Caco-2 (cell line): ENCODE measurements at regions of chr3 and their contacts with region 1.

Region 1: DNA sequence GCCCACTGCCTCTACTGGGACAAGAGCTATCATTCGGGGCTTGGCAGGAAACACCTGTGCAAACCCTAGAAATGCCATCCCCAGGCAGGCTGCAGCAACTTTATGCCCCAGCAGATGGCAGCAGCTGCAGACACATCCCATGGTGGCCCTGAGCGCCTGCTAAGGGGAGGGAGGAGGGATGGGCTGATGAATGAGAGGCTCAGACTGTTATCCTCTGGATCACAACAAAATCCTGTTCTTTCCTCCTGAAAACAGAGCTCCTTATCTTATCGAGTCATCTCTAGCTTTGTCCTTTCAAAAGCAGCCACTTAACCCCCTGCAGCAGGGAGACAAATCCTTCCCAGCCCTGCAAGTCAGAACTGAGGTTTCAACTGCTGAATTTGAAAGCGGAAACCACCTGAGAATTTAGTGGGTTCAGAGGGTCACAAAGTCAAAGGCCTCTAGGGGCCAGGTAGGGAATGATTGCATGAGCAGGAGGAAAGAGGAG is 90.6 kb upstream of the PROK2 start:
- DNase-seq: peak; percentile 77 to 86
- H3K4me3 ChIP-seq: no peak overlapping the region
- H3K4me3 Mint-ChIP-seq: no peak overlapping the region
- H3K27ac Mint-ChIP-seq: no peak overlapping the region
- H3K4me1 ChIP-seq: 0 out of 2 replicates have a peak, but pooled peaks cover 3% of the 10 kb centered on the region
- H3K4me1 Mint-ChIP-seq: no peaks in the 10 kb centered on the region
- H3K27me3 ChIP-seq: no peaks in the 10 kb centered on the region
- H3K27me3 Mint-ChIP-seq: no peaks in the 10 kb centered on the region
- CTCF ChIP-seq: peak; percentile 59 to 88

Region 2: GRCh38 chr3:71710906-71711494 is 164.5 kb before region 1 on chr3:
- CTCF ChIA-PET with region 1: interaction called, 6 read pairs
- POLR2A ChIA-PET with region 1: no interaction called
- intact Hi-C with region 1: loop called (anchors 5 kb)
- DNase-seq: peak in 1 of 2 experiments; percentile 29
- H3K4me3 ChIP-seq: no peak overlapping the region
- H3K4me3 Mint-ChIP-seq: no peak overlapping the region
- H3K27ac Mint-ChIP-seq: no peak overlapping the region
- H3K4me1 ChIP-seq: peaks cover 9% of the 10 kb centered on the region
- H3K4me1 Mint-ChIP-seq: no peaks in the 10 kb centered on the region
- H3K27me3 ChIP-seq: no peaks in the 10 kb centered on the region
- H3K27me3 Mint-ChIP-seq: no peaks in the 10 kb centered on the region
- CTCF ChIP-seq: peak; percentile 38 to 57

Region 3: DNA sequence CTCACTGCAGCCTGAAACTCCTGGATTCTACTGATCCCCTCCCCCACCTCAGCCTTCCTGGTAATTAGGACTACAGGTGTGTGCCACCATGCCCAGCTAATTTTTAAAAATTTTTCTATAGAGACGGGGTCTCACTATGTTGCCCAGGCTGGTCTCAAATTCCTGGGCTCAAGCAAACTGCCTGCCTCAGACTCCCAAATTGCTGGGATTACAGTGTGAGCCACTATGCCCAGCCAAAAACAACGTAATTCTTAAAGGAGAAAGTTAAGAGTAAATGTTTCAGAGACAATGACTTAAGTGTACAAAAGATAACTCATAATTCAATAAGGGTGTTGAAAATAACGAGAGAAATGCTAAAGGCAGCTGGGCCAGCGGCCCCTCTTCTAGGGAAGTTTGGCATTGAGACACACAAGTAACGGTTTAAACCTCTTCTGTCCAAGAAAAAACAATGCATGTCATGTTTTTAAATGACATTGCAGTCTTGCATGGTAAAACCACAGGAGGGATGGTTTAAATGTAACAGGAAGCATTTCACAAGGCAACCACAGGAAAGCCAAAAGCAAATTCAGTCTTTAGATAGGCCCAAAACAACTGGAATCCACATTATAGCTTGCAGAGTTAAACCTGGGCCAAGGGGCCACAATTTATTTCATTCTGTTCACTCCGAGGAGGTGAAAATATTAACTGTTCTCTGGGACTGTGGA is 95.7 kb before region 1 on chr3:
- CTCF ChIA-PET with region 1: no interaction called
- POLR2A ChIA-PET with region 1: interaction called, 10 read pairs
- intact Hi-C with region 1: no loop called
- DNase-seq: no peak
- H3K4me3 ChIP-seq: no peak overlapping the region
- H3K4me3 Mint-ChIP-seq: no peak overlapping the region
- H3K27ac Mint-ChIP-seq: no peak overlapping the region
- H3K4me1 ChIP-seq: no peaks in the 10 kb centered on the region; the same call in 1 of the 2 replicates
- H3K4me1 Mint-ChIP-seq: no peaks in the 10 kb centered on the region
- H3K27me3 ChIP-seq: peaks cover 1% of the 10 kb centered on the region; the same call in 1 of the 2 replicates
- H3K27me3 Mint-ChIP-seq: peaks cover 4% of the 10 kb centered on the region
- CTCF ChIP-seq: no peak

Region 4: GRCh38 chr3:71926262-71926600 is 50.7 kb after region 1 on chr3:
- CTCF ChIA-PET with region 1: interaction called, 3 read pairs
- POLR2A ChIA-PET with region 1: no interaction called
- intact Hi-C with region 1: loop called (anchors 2 kb)
- DNase-seq: peak; percentile 67 to 71
- H3K4me3 ChIP-seq: no peak overlapping the region
- H3K4me3 Mint-ChIP-seq: no peak overlapping the region
- H3K27ac Mint-ChIP-seq: no peak overlapping the region
- H3K4me1 ChIP-seq: peaks cover 8% of the 10 kb centered on the region; the same call in 1 of the 2 replicates
- H3K4me1 Mint-ChIP-seq: peaks cover 9% of the 10 kb centered on the region
- H3K27me3 ChIP-seq: no peaks in the 10 kb centered on the region
- H3K27me3 Mint-ChIP-seq: peaks cover 8% of the 10 kb centered on the region
- CTCF ChIP-seq: peak; percentile 66 to 76

Region 5: DNA sequence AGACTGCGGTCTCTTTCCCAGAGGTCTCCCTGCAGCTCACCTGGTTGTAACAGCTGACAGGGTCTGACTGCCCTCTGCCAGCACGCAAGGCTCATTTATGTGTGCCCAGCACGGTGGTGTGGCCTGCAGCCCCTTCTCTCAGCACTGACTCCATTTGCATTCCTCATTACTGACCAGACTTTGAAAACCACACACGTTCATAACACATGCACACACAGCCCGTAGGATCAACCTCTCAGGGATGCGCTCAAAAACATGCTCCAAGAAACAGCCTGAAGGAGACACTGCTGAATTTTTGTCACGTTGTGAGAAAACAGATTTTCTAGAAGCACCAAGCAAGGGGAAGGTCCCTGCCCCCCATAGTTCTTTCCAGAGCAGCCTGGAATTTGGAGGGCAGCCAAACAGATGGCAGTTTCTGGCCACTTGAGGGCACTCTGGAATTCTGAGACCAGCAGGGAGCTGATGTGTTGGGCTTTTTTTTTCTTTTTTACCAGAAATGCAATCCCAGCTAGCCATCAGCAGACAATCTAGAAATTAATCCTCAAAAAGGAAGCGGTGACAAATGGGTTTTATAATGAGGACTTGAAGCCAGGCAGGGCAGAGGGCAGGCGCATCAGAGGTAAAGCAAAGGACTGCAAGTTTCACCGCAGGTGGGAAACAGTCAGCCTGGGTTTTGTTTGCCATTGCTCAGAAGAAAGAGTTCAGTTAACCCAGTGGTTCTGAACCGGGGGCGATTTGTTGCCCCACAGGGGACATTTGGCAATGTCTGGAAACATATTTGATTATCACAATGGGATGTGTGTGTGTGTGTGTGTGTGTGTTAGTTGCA is 80.0 kb after region 1 on chr3:
- CTCF ChIA-PET with region 1: no interaction called
- POLR2A ChIA-PET with region 1: no interaction called
- intact Hi-C with region 1: loop called (anchors 1 kb)
- DNase-seq: peak; percentile 45 to 49
- H3K4me3 ChIP-seq: no peak overlapping the region
- H3K4me3 Mint-ChIP-seq: no peak overlapping the region
- H3K27ac Mint-ChIP-seq: no peak overlapping the region
- H3K4me1 ChIP-seq: no peaks in the 10 kb centered on the region
- H3K4me1 Mint-ChIP-seq: no peaks in the 10 kb centered on the region
- H3K27me3 ChIP-seq: no peaks in the 10 kb centered on the region
- H3K27me3 Mint-ChIP-seq: peaks cover 12% of the 10 kb centered on the region
- CTCF ChIP-seq: peak; percentile 64 to 84

Region 6: GRCh38 chr3:73086071-73086494 is 1210.6 kb after region 1 on chr3:
- CTCF ChIA-PET with region 1: no interaction called
- POLR2A ChIA-PET with region 1: no interaction called
- intact Hi-C with region 1: loop called (anchors 1 kb)
- DNase-seq: peak in 1 of 2 experiments; percentile 59
- H3K4me3 ChIP-seq: no peak overlapping the region
- H3K4me3 Mint-ChIP-seq: no peak overlapping the region
- H3K27ac Mint-ChIP-seq: no peak overlapping the region
- H3K4me1 ChIP-seq: no peaks in the 10 kb centered on the region
- H3K4me1 Mint-ChIP-seq: no peaks in the 10 kb centered on the region
- H3K27me3 ChIP-seq: no peaks in the 10 kb centered on the region
- H3K27me3 Mint-ChIP-seq: no peaks in the 10 kb centered on the region
- CTCF ChIP-seq: peak; percentile 79 to 85